GM10248 (cell line): ENCODE measurements at regions of chr1 and their contacts with region 1.

Region 1: GRCh38 chr1:91924146-91924545 is 25.1 kb upstream of the BRDT start:
- DNase-seq: no peak
- CTCF ChIP-seq: no peak

Region 2: GRCh38 chr1:91282695-91283420 is 641.3 kb before region 1 on chr1:
- CTCF ChIA-PET with region 1: interaction called, 41 read pairs
- POLR2A ChIA-PET with region 1: no interaction called
- DNase-seq: peak; percentile 45
- CTCF ChIP-seq: peak; percentile 83

Region 3: GRCh38 chr1:92211166-92211565 is 287.0 kb after region 1 on chr1:
- CTCF ChIA-PET with region 1: no interaction called
- POLR2A ChIA-PET with region 1: no interaction called
- DNase-seq: no peak
- CTCF ChIP-seq: no peak